Astrocyte of the cerebellum (primary cell): ENCODE measurements at regions of chr16 and their contacts with region 1.

Region 1: DNA sequence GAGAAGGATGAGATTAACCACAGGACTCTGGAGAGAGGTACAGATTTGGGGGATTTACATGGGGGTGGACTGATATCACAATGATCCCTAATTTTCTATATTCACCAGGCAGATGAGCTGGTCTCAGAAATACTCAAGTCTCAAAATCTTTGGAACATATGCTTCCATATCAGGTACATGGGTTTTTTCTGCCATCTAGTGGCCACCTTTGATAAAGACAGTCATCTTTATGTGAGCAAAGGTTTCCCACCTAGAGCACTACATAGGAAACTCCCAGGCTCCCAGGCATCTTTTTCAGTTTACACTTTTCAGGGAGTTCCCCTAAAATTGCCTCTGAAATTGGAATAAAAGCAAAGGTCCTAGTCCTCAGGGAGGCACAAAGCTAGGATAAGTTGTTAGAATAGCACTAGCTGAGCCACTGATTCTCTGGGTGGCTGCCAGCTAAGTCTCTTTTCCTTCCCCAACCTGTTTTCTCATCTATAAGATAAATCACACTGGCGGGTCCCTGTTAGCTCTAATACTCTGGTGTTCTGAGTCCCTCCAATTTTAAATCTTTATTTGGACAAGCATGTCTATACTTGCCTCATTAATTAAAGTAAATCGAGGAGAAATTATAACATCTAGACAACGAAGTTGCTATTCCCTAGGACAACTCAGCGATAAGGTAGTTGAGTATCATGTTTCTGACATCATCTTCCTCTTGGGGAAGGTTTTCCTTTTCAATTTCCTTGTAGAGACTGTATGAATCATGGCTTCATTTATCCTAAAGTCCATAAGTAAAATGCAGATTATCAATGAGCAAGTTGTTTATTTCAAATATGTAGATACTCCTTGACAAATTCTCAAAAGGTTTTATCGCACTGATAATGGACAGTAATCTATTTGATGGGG is 19.0 kb upstream of the MON1B start:
- DNase-seq: peak; percentile 49
- H3K4me3 ChIP-seq: no peak overlapping the region
- CTCF ChIP-seq: peak; percentile 69

Region 2: GRCh38 chr16:75801307-75801706 is 1370.7 kb before region 1 on chr16:
- in situ Hi-C with region 1: loop called (anchors 25 kb)
- DNase-seq: no peak
- H3K4me3 ChIP-seq: no peak overlapping the region
- CTCF ChIP-seq: no peak